ENCODE measurements at regions of chr4 and their contacts with region 1.

Region 1: GRCh38 chr4:86497980-86498862 is 95.9 kb upstream of the PTPN13 start:
- DNase-seq: peak; percentile 79
- H3K4me3 ChIP-seq: peak overlapping the region; percentile 29; the same call in 1 of the 2 replicates
- H3K27ac ChIP-seq: peak overlapping the region; percentile 53; the same call in 1 of the 2 replicates
- H3K4me1 ChIP-seq: peaks cover 50% of the 10 kb centered on the region
- H3K27me3 ChIP-seq: no peaks in the 10 kb centered on the region

Region 2: DNA sequence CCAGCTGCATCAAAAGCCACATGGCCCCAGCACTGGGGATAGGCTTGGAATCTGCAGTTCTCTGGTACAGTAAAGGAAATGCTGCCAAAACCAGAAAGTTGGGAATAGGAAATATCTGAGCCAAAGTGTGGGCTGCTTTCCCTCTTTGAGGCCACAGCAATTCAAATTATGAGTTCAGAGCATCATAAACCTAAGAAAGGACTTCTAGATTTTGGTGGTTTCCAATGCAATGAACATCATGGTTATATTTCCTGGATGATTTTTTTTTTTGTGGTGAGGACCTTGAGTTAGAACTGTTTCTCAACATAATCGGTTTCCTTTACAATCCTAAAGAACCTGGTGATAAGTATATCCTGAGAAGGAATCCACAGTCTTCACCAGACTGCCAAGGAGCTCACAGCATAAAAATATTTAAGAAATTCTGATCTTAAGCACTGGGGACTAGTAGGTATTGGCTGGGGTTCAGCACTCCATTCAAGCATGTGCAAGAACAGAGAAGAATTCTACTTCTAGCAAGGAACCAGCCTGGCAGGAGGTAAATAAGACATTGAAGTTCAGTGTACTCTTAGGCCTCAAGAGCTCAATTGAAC is 1053.1 kb before region 1 on chr4:
- in situ Hi-C with region 1: no loop called
- DNase-seq: no peak
- H3K4me3 ChIP-seq: no peak overlapping the region
- H3K27ac ChIP-seq: no peak overlapping the region
- H3K4me1 ChIP-seq: no peaks in the 10 kb centered on the region
- H3K27me3 ChIP-seq: no peaks in the 10 kb centered on the region

Region 3: GRCh38 chr4:86330961-86331742 is 167.1 kb before region 1 on chr4:
- in situ Hi-C with region 1: no loop called
- DNase-seq: no peak
- H3K4me3 ChIP-seq: no peak overlapping the region
- H3K27ac ChIP-seq: no peak overlapping the region
- H3K4me1 ChIP-seq: peaks cover 6% of the 10 kb centered on the region; the same call in 1 of the 2 replicates
- H3K27me3 ChIP-seq: no peaks in the 10 kb centered on the region

Region 4: DNA sequence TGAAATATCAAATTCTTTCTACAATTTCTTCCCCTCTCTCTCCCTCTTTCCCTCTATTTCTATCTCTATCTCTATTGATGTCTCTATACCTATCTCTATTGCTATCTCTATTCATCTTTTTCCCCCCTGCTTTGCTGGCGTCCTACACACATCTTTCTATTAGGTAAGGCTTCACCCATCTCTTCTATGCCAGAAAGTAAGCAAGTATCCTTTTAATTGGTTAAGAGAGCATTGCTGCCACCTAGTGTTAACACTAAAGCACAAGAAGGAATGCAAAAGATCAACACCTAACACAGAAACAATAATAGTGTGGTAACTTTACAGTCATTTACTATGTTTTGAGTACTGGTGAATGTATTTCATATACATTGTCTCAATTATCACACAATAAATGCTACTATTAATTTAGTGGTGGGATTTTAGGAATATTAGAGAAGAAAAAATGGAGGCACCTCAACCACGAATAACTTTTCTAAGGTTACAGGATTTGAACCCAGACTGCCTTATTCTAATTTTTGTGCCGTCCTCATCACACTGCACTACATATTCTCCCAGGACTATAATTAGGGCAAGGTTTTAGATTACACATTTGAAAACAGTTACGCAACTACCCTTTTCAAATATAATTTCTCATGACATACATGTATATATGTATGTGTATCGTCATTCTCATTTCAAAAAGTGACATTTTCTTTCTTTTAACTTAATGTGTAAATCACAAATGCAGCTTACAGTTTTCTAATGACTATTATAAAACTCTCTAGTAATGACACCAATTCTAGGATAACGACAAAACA is 397.7 kb after region 1 on chr4:
- in situ Hi-C with region 1: loop called (anchors 5 kb)
- DNase-seq: peak; percentile 83
- H3K4me3 ChIP-seq: no peak overlapping the region
- H3K27ac ChIP-seq: no peak overlapping the region
- H3K4me1 ChIP-seq: peaks cover 7% of the 10 kb centered on the region; the same call in 1 of the 2 replicates
- H3K27me3 ChIP-seq: no peaks in the 10 kb centered on the region

Region 5: GRCh38 chr4:87093443-87094123 is 595.4 kb after region 1 on chr4:
- in situ Hi-C with region 1: loop called (anchors 25 kb)
- DNase-seq: peak; percentile 82
- H3K4me3 ChIP-seq: no peak overlapping the region
- H3K27ac ChIP-seq: peak overlapping the region; percentile 87
- H3K4me1 ChIP-seq: peaks cover 24% of the 10 kb centered on the region
- H3K27me3 ChIP-seq: no peaks in the 10 kb centered on the region

Region 6: DNA sequence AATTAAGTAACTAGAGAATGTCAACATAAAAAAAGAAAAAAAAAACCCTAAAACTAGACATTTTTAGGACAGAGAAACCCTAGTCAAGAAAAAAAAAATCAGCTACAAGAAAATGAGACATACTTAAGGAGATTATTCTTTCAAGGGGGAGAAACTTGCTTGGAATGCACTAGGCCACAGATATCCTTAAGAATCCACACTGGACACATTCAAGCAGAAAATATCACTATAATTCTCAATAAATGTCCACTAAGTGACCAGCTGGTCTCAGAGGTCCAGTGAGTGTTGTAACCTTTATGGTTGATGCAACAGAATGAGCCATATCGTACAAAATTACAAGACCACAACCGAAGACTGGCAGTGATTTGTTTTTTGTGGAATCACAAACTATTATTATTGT is 1285.6 kb after region 1 on chr4:
- in situ Hi-C with region 1: no loop called
- DNase-seq: no peak
- H3K4me3 ChIP-seq: no peak overlapping the region
- H3K27ac ChIP-seq: no peak overlapping the region
- H3K4me1 ChIP-seq: no peaks in the 10 kb centered on the region
- H3K27me3 ChIP-seq: no peaks in the 10 kb centered on the region